PC-9 (cell line): ENCODE measurements at regions of chr9 and their contacts with region 1.

Region 1: DNA sequence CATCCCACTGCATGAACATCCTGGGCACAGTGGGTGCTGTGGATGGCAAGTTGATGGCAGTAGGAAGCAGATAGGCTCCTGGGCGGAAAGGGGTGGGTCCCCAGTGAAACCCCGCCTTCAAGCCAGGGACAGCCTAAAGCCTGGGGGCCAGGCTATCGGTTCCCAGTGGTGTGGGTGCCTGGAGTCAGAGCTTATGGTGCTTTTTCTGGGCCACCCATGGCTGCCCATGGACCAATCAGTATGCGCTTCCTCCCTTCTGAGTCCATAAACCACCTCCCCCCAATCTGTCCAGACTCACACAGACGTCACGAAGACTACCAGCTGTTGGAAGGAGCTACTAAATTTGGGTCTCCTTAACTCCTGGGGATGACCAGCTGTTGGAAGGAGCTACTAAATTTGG is 17.5 kb upstream of the ECPAS start:
- DNase-seq: no peak
- H3K4me3 ChIP-seq: no peak overlapping the region
- H3K27ac ChIP-seq: no peak overlapping the region
- H3K4me1 ChIP-seq: no peaks in the 10 kb centered on the region
- H3K27me3 ChIP-seq: no peaks in the 10 kb centered on the region
- CTCF ChIP-seq: no peak

Region 2: GRCh38 chr9:110895147-110895905 is 606.3 kb before region 1 on chr9:
- CTCF ChIA-PET with region 1: interaction called, 18 read pairs
- POLR2A ChIA-PET with region 1: no interaction called
- intact Hi-C with region 1: no loop called
- DNase-seq: no peak
- H3K4me3 ChIP-seq: no peak overlapping the region
- H3K27ac ChIP-seq: no peak overlapping the region
- H3K4me1 ChIP-seq: no peaks in the 10 kb centered on the region
- H3K27me3 ChIP-seq: no peaks in the 10 kb centered on the region
- CTCF ChIP-seq: no peak

Region 3: DNA sequence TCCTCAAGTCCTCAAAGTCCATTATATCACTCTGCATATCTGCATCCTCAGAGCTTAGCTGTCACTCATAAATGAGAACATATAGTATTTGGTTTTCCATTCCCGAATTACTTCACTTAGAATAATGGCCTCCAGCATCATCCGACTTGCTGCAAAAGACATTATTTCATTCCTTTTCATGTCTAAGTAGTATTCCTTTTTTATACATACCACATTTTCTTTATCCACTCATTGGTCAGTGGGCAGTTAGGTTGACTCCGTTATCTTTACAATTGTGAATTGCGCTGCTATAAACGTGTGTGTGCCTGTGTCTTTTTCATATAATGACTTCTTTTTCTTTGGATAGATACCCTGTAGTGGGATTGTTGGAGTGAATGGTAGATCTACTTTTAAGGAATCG is 288.8 kb before region 1 on chr9:
- CTCF ChIA-PET with region 1: no interaction called
- POLR2A ChIA-PET with region 1: no interaction called
- intact Hi-C with region 1: no loop called
- DNase-seq: no peak
- H3K4me3 ChIP-seq: no peak overlapping the region
- H3K27ac ChIP-seq: no peak overlapping the region
- H3K4me1 ChIP-seq: no peaks in the 10 kb centered on the region
- H3K27me3 ChIP-seq: no peaks in the 10 kb centered on the region
- CTCF ChIP-seq: no peak